HEK293 (cell line): ENCODE measurements at regions of chr9 and their contacts with region 1.

Region 1: GRCh38 chr9:109574068-109574882 is 76.2 kb upstream of the PTPN3 start:
- H3K4me3 ChIP-seq: no peak overlapping the region
- H3K27ac ChIP-seq: no peak overlapping the region
- H3K4me1 ChIP-seq: no peaks in the 10 kb centered on the region
- CTCF ChIP-seq: no peak

Region 2: DNA sequence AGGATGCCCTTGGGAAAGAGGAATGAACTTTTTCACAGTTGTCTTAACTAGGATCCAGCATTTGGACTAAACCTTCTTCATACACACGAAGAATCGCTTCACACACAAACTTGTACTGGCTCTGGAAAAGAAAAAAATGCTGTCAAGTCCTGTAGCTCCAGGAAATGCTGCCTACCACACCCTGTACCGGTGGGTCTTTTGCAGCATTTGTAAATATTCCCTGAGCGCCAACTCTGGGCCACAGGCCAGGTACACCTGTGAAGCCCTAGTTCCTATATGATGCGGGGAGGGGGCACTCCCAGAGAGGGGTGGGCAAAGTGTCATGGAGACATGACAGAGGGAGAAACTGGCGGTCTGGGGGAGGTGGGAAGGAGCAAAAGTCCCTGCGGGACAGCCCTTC is 194.8 kb before region 1 on chr9:
- CTCF ChIA-PET with region 1: no interaction called
- POLR2A ChIA-PET with region 1: no interaction called
- H3K4me3 ChIP-seq: no peak overlapping the region
- H3K27ac ChIP-seq: no peak overlapping the region
- H3K4me1 ChIP-seq: no peaks in the 10 kb centered on the region
- CTCF ChIP-seq: no peak

Region 3: GRCh38 chr9:109880277-109881169 is 306.2 kb after region 1 on chr9:
- CTCF ChIA-PET with region 1: interaction called, 10 read pairs
- POLR2A ChIA-PET with region 1: no interaction called
- H3K4me3 ChIP-seq: no peak overlapping the region
- H3K27ac ChIP-seq: no peak overlapping the region
- H3K4me1 ChIP-seq: no peaks in the 10 kb centered on the region
- CTCF ChIP-seq: no peak

Region 4: DNA sequence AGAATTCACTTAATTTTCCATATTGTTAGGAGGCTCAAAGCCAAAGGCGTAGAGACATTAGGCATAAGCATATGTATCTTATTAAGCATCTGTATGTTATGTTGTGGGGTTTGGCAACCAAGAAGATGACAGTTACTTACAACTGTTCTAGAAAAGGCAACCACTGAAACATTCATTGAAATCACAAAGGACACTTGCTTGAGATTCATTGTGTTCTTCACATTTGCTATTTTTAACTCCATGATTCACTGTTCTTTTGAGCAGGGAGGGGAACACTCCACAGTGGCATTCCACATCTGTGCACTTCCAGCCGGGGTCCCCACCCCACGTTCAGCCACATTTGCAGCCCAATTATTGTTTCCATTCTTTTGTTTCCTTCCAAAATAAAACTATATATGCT is 312.8 kb after region 1 on chr9:
- CTCF ChIA-PET with region 1: interaction called, 19 read pairs
- POLR2A ChIA-PET with region 1: no interaction called
- H3K4me3 ChIP-seq: no peak overlapping the region
- H3K27ac ChIP-seq: no peak overlapping the region
- H3K4me1 ChIP-seq: no peaks in the 10 kb centered on the region
- CTCF ChIP-seq: no peak